Right ventricle myocardium superior (tissue), 1 donor: ENCODE measurements at regions of chr7 and their contacts with region 1.

Region 1: DNA sequence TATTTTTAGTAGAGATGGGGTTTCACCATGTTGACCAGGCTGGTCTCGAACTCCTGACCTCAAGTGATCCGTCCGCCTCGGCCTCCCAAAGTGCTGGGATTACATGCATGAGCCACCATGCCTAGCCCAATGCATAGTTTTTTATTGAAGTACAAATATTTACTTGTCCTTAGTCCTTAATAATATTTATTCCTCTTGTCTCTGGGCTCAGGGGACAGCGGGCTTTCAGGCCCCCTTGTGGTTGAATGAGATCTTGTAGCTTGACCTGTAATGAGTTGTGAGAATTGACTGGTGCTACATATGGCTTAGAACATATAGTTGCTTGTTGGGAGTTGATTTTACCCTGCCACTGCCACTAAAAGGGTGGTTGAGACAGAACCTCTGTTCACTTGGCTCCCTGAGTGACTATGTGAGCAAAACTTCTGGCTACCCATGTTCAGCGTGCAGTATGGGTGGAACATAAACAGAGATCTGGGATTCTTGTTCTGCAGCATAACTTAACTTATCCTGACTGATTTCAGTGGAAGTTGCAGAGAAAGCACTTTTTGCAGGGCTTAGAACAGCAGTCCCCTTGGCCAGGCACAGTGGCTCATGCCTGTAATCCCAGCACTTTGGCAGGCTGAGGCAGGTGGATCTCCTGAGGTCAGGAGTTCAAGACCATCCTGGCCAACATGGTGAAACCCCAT is 14.9 kb downstream of the CCL26 start:
- DNase-seq: no peak
- ATAC-seq: peak; percentile 48

Region 2: GRCh38 chr7:75608451-75609122 is 148.5 kb before region 1 on chr7:
- intact Hi-C with region 1: loop called (anchors 10 kb)
- DNase-seq: no peak
- ATAC-seq: no peak